HAP-1 (cell line): ENCODE measurements at regions of chrX and their contacts with region 1.

Region 1: DNA sequence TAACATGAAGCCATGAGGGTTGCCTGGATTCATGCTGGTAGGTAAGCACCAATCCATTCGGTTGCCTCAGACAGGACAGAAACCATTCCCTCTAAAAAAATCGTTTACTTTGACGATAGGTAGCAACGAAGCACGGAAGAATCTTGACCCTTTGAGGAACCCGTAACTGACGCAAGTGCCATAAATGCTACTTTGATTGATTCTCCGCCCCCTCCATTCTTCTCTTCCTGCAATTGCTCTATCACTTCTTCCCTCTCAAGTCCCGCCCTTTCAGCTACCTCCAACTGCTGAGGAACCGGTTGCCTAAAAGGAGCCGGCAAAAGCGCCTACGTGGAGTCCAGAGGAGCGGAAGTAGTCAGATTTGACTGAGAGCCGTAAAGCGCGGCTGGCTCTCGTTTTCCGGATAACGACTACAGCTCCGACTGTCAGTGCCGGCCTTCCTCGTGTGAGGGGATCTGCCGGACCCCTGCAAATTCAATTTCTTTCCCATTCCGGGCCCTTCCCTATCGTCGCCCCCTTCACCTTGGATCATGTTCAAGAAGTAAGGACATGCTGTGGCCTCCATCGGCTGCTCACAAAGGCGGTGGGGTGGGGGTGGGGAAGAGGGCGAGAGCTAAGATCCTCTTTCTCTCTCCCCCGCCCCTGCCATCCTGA is at the start of gene MCTS1:
- DNase-seq: peak; percentile 95 to 98
- H3K4me3 ChIP-seq: peak within 1 kb of the TSS; percentile 71
- H3K4me1 ChIP-seq: peaks cover 11% of the 10 kb centered on the region
- H3K27me3 ChIP-seq: no peaks in the 10 kb centered on the region

Region 2: GRCh38 chrX:120015145-120016067 is 588.4 kb before region 1 on chrX:
- in situ Hi-C with region 1: no loop called
- DNase-seq: peak; percentile 37 to 84
- H3K4me3 ChIP-seq: peak overlapping the region; percentile 42
- H3K4me1 ChIP-seq: peaks cover 15% of the 10 kb centered on the region
- H3K27me3 ChIP-seq: no peaks in the 10 kb centered on the region; the same call in 1 of the 2 replicates

Region 3: GRCh38 chrX:120365320-120365719 is 238.5 kb before region 1 on chrX:
- in situ Hi-C with region 1: no loop called
- DNase-seq: peak in 1 of 2 experiments; percentile 85
- H3K4me3 ChIP-seq: no peak overlapping the region
- H3K4me1 ChIP-seq: peaks cover 10% of the 10 kb centered on the region
- H3K27me3 ChIP-seq: no peaks in the 10 kb centered on the region

Region 4: GRCh38 chrX:120560842-120561633 is 42.8 kb before region 1 on chrX and contains the start of gene CUL4B:
- in situ Hi-C with region 1: loop called (anchors 5 kb)
- DNase-seq: peak; percentile 98
- H3K4me3 ChIP-seq: peak within 1 kb of the TSS; percentile 73
- H3K4me1 ChIP-seq: peaks cover 18% of the 10 kb centered on the region
- H3K27me3 ChIP-seq: no peaks in the 10 kb centered on the region